Right ventricle myocardium inferior (tissue), 1 donor: ENCODE measurements at regions of chr1 and their contacts with region 1.

Region 1: DNA sequence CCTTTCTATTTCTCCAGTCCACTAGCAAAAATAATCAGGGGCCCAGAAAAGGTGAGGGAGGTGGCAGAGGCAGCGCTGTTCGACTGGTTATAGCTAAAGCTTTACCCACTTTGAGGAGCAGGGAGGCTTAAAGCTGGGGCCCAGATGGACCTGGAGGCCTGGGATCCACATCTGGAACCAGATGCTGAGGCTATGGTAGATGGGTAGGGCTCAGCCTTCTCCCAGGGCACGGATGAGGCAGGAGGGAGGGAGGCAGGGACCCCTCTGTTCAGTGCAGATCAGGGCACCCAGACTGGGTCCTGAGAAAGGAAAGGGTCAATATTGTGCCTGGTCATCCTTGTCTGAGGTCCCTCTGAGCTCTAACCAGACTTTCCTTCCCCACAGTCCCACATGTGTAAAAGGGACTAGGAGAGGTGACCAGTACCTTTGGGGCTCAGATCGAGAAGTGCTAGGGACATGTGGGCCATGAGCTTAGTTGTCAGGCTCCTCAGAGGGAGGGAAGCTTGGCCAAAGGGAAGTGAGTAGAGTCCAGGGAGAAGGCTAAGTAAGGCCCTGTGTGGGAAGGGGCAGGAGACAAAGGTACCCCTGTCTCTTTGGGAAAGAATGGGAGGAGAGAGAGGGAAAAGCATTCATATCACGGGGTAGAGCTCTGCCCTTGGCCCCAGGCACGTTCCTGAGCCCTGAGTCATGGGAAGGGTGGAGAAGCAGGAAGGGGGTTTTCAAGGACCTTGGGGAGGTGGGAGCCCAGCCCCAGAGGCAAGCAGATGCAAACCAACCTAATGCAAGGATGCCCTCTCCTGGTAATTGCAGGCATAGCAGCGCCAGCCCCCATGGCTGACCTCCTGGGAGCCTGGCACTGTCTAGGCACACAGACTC is 15.4 kb downstream of the LMNA start:
- DNase-seq: peak; percentile 87
- ATAC-seq: peak; percentile 54

Region 2: GRCh38 chr1:156054500-156055280 is 75.3 kb before region 1 on chr1 and contains the start of gene LAMTOR2:
- intact Hi-C with region 1: no loop called
- DNase-seq: peak; percentile 99
- ATAC-seq: peak; percentile 92
- total RNA-seq, gene LAMTOR2: 63.8 TPM

Region 3: DNA sequence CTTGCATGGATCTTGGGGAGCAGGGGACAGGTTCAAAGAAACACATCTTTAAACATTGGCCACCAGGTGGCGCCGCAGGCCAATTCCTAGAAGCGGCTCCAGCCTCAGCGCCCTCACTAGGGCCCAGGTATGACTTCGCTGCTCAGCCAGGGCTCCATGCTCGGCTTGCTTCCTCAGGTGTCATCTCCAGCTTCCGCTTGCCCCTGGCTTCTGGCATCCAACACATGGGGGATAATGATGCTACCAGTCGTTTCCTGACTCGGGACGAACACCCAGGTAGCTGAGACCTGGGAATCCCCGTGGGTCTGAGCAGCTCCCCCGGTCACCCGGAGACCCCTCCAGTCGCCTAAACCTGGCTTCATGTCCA is 39.1 kb before region 1 on chr1:
- intact Hi-C with region 1: loop called (anchors 1 kb)
- DNase-seq: peak; percentile 93
- ATAC-seq: peak; percentile 80

Region 4: GRCh38 chr1:156096640-156097391 is 33.1 kb before region 1 on chr1:
- intact Hi-C with region 1: loop called (anchors 1 kb)
- DNase-seq: peak; percentile 95
- ATAC-seq: peak; percentile 96

Region 5: DNA sequence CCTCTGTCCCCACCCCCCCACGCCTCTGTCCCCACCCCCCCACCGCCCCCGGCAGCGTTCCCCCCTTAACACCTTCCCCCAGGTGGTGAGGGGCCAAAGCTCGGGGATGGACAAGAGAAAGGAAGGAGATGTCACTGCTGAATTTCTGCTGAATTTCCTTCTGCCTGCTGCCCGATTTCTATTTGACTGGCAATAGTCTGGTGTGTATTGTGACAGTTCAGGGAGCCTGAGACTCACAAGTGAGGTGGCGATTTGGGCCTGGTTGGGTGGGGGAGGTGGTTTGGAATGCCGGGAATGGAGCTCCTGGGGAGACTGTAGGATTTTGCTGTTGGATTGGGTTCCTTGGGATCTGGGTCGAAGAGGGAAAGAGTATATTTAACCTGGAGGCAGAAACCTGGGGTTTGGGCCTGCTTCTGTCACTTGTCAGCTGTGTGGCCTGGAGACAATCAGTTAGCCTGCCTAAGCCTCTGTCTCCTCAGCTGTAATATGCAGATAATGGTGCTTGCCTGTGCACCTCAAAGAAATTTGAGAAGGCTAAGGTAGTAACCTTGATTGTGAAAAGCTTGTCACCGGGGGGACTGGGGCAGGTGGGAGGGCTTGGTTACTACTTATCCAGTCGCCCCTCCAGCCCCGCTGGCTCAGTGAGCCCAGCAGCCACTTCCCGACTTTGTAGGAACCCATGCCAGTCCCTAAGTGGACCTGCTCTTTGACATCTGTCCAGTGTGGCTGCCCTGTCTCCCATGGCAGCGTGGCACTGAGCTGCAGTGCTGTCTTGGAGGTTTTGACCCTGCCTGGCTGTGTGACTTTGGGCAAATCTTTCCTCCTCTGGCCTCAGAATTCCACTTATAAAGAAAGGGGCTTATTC is 23.1 kb before region 1 on chr1:
- intact Hi-C with region 1: no loop called
- DNase-seq: no peak
- ATAC-seq: peak; percentile 20

Region 6: DNA sequence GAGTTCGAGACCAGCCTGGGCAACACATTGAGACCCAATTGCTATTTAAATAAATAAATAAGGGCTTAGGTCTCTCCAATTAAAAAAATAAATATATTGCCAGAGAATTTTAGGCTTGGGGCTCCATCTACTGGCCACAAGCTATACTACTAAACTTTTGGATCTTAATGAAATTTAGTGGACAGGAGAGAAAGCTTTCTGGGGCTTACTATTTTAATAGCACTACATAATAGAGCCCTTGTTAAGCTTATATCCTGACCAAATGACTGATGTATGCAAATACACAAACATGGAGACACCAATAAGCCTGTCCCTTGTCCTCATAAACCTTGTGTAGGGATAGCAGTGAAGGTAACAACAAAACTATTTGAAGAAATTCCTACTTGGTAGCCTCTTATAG is 189.7 kb after region 1 on chr1:
- intact Hi-C with region 1: loop called (anchors 10 kb)
- DNase-seq: no peak
- ATAC-seq: no peak